ENCODE measurements at regions of chr5 and their contacts with region 1.

Region 1: DNA sequence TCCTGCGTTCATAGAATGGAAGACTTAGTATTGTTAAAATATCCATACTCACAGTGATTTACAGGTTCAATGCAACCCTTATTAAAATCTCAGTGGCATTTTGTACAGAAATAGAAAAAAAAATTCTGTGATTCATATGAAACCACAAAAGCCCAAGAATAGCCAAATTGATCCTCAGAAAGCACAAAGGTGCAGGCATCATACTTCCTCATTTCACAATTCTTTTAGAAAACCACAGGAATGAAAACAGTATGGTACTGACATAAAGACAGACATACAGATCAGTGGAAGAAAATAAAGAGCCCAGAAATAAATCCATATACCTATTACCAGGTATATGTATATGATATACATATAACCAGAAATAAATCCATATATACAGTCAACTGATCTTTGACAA is 86.8 kb upstream of the MEGF10 start:
- DNase-seq: no peak
- ATAC-seq: no peak
- H3K4me3 ChIP-seq: no peak overlapping the region
- H3K27ac ChIP-seq: no peak overlapping the region
- H3K4me1 ChIP-seq: no peaks in the 10 kb centered on the region
- H3K27me3 ChIP-seq: no peaks in the 10 kb centered on the region
- CTCF ChIP-seq: no peak
- EP300 ChIP-seq: no peak
- POLR2A ChIP-seq: no peak
- RAD21 ChIP-seq: no peak

Region 2: GRCh38 chr5:127260686-127261085 is 56.9 kb after region 1 on chr5:
- CTCF ChIA-PET with region 1: no interaction called
- POLR2A ChIA-PET with region 1: no interaction called
- in situ Hi-C with region 1: loop called (anchors 5 kb)
- intact Hi-C with region 1: no loop called
- DNase-seq: no peak
- ATAC-seq: no peak
- H3K4me3 ChIP-seq: no peak overlapping the region
- H3K27ac ChIP-seq: no peak overlapping the region
- H3K4me1 ChIP-seq: no peaks in the 10 kb centered on the region
- H3K27me3 ChIP-seq: no peaks in the 10 kb centered on the region
- CTCF ChIP-seq: no peak
- EP300 ChIP-seq: no peak
- POLR2A ChIP-seq: no peak
- RAD21 ChIP-seq: no peak

Region 3: DNA sequence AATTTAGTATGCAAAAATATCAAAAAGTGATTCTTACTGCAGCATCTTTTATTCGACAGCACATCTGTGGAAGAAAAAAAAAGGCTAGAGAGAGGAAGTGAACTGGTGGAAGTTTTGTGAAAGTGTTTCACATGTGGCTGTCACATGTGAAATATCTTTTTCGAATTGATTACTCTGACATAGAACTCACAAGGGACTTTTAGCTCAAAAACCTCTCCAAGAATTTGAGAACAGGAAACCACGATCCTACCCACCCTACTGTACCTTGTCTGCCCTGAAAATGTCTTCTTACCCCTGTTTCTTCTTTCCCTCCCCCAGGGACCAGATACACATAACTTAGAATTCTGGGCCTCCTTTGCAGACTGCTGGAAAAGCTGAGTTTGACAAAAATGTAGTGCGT is 207.1 kb after region 1 on chr5:
- CTCF ChIA-PET with region 1: no interaction called
- POLR2A ChIA-PET with region 1: no interaction called
- in situ Hi-C with region 1: no loop called
- intact Hi-C with region 1: no loop called
- DNase-seq: no peak
- ATAC-seq: no peak
- H3K4me3 ChIP-seq: no peak overlapping the region
- H3K27ac ChIP-seq: no peak overlapping the region
- H3K4me1 ChIP-seq: no peaks in the 10 kb centered on the region
- H3K27me3 ChIP-seq: peaks cover 0 to 6% of the 10 kb centered on the region in 2 experiments; a peak in 1 of 5 replicates
- CTCF ChIP-seq: no peak
- EP300 ChIP-seq: no peak
- POLR2A ChIP-seq: no peak
- RAD21 ChIP-seq: no peak

Measured in K562 (cell line).